ENCODE measurements at regions of chr6 and their contacts with region 1.

Region 1: GRCh38 chr6:34392497-34393190 is at the start of gene NUDT3:
- DNase-seq: peak; percentile 91 to 99 (median 94)

Region 2: GRCh38 chr6:34154668-34155447 is 237.8 kb before region 1 on chr6:
- intact Hi-C with region 1: no loop called
- DNase-seq: peak; percentile 33 to 96 (median 62)

Region 3: DNA sequence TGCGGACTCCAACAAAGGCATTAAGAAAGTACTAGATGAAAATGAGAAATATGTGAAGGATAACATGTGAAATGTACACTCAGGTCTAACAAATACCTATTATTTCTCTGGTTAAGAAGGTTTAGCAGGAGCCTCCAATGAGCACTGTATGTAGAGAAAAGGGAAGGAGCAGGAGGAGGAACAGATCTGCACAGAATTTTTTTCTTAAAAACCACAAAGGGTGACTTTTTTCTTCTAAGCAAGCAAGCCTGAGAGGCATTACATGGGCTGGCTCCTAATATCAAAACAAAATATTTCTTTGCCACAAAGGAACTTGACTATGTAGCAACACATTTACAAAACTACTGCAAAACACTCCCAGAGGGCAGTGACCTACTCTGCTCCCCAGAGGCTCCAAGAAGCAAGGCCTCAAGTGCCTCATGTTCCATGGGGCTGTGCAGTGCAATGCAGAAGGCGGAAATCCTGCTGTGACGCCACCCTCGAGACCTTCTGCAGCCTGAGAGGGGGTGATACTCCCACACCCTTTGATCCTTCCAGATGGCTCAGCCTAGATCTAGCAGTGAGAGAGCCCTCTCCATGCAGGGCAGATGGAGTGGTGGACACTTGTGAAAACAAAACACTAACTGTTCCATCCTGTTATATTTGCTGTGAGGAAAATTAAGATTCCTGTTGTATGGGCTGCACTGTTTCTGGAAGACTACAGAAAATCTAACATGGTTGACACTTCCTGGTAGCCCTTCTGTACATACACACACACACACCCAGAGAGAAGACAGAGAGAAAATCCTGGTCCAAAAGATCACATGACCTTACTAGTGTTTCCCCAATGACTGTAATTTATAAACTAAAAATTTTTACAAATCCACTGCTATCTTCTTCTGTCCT is 107.8 kb before region 1 on chr6:
- intact Hi-C with region 1: loop called (anchors 10 kb)
- DNase-seq: peak in 8 of 10 donors; percentile 15 to 88 (median 30)

Region 4: GRCh38 chr6:34315780-34316179 is 76.9 kb before region 1 on chr6:
- intact Hi-C with region 1: loop called (anchors 5 kb)
- DNase-seq: no peak

Region 5: GRCh38 chr6:34362909-34363680 is 29.5 kb before region 1 on chr6:
- intact Hi-C with region 1: no loop called
- DNase-seq: no peak

Region 6: DNA sequence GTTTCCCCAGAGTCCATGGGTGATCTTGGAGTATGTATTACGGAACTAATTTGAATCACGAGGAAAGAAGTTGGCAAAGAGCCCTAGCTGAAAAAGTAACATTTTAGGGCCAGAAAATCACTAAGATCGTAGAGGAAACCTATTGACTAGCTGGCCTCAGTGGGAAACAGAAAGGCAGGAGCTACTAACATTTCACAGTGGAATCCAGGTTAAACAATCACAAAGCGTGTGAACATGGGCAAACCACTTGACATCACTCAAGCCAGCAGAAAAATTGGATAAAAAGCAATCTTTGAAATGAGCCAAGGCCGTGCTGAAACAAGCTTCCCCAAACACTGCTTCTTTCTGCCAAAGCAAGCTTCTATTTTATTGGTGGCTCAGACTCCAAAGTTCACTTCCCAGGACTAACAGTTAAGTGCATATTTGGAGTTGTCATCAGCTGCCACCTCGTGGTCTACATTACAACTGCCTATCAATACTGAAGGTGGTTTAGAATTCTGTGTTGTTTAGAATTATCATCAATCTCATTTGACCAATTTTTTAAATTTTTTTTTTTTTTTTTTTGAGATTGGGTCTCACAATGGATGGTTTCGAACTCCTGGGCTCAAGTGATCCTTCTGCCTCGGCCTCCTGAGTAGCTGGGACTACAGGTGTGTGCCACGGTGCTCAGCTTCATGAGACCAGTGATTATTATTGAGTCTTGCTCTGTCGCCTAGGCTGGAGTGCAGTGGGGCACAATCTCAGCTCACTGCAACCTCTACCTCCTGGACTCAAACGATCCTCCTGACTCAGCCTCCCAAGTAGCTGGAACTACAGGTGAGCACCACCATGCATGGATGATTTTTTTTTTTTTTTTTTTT is 22.6 kb after region 1 on chr6:
- intact Hi-C with region 1: loop called (anchors 1 kb)
- DNase-seq: peak in 5 of 10 donors; percentile 29 to 64 (median 51)